ENCODE measurements at regions of chr12 and their contacts with region 1.

Region 1: GRCh38 chr12:121773011-121773777 is 20.3 kb downstream of the RHOF start:
- DNase-seq: peak; percentile 64
- ATAC-seq: peak; percentile 81
- H3K4me3 ChIP-seq: no peak overlapping the region
- H3K27ac ChIP-seq: peak overlapping the region; percentile 49
- H3K4me1 ChIP-seq: peaks cover 20 to 49% of the 10 kb centered on the region in 2 experiments
- H3K27me3 ChIP-seq: no peaks in the 10 kb centered on the region
- CTCF ChIP-seq: peak; percentile 88 to 95 (median 90)
- POLR2A ChIP-seq: no peak
- RAD21 ChIP-seq: peak; percentile 99

Region 2: GRCh38 chr12:121697098-121697698 is 76.0 kb before region 1 on chr12:
- CTCF ChIA-PET with region 1: interaction called, 14 read pairs
- POLR2A ChIA-PET with region 1: no interaction called
- RAD21 ChIA-PET with region 1: interaction called in 1 of 2 experiments, 3 read pairs
- intact Hi-C with region 1: loop called (anchors 1 kb)
- DNase-seq: peak; percentile 47
- ATAC-seq: peak; percentile 59
- H3K4me3 ChIP-seq: no peak overlapping the region
- H3K27ac ChIP-seq: no peak overlapping the region
- H3K4me1 ChIP-seq: peaks cover 0 to 7% of the 10 kb centered on the region in 2 experiments; a peak in 2 of 4 replicates
- H3K27me3 ChIP-seq: no peaks in the 10 kb centered on the region
- CTCF ChIP-seq: peak; percentile 23 to 96 (median 60); a peak in 5 of 6 replicates
- POLR2A ChIP-seq: no peak
- RAD21 ChIP-seq: peak; percentile 89

Region 3: DNA sequence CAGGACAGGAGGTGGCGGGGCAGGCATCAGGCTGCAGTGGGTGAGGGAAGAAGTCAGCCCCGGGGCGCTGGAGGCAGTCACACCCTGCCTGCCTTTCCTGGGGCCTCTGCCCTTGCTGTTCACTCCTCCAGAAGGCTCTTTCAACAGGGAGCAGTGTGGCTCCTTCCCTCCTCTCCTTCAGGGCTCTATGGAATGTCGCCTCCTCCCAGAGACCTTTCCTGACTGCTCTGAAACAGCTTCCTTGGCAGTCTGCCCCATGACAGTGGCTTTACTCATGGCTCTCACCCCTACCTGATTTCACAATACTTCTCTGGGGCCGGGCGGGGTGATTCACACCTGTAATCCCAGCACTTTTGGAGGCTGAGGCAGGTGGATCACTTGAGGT is 13.2 kb after region 1 on chr12:
- CTCF ChIA-PET with region 1: interaction called, 20 read pairs
- POLR2A ChIA-PET with region 1: no interaction called
- RAD21 ChIA-PET with region 1: interaction called in 1 of 2 experiments, 9 read pairs
- intact Hi-C with region 1: no loop called
- DNase-seq: peak; percentile 99
- ATAC-seq: peak; percentile 86
- H3K4me3 ChIP-seq: peak overlapping the region in 1 of 2 experiments; percentile 37; a peak in 2 of 4 replicates
- H3K27ac ChIP-seq: peak overlapping the region; percentile 98
- H3K4me1 ChIP-seq: peaks cover 63 to 95% of the 10 kb centered on the region in 2 experiments
- H3K27me3 ChIP-seq: no peaks in the 10 kb centered on the region
- CTCF ChIP-seq: no peak
- POLR2A ChIP-seq: no peak
- RAD21 ChIP-seq: no peak

Region 4: GRCh38 chr12:121829250-121829918 is 56.2 kb after region 1 on chr12:
- CTCF ChIA-PET with region 1: no interaction called
- POLR2A ChIA-PET with region 1: no interaction called
- RAD21 ChIA-PET with region 1: no interaction called
- intact Hi-C with region 1: no loop called
- DNase-seq: no peak
- ATAC-seq: no peak
- H3K4me3 ChIP-seq: no peak overlapping the region
- H3K27ac ChIP-seq: 0 out of 2 replicates have a peak overlapping the region, but pooled peaks have one; percentile 13
- H3K4me1 ChIP-seq: no peaks in the 10 kb centered on the region
- H3K27me3 ChIP-seq: no peaks in the 10 kb centered on the region
- CTCF ChIP-seq: no peak
- POLR2A ChIP-seq: no peak
- RAD21 ChIP-seq: no peak

Region 5: DNA sequence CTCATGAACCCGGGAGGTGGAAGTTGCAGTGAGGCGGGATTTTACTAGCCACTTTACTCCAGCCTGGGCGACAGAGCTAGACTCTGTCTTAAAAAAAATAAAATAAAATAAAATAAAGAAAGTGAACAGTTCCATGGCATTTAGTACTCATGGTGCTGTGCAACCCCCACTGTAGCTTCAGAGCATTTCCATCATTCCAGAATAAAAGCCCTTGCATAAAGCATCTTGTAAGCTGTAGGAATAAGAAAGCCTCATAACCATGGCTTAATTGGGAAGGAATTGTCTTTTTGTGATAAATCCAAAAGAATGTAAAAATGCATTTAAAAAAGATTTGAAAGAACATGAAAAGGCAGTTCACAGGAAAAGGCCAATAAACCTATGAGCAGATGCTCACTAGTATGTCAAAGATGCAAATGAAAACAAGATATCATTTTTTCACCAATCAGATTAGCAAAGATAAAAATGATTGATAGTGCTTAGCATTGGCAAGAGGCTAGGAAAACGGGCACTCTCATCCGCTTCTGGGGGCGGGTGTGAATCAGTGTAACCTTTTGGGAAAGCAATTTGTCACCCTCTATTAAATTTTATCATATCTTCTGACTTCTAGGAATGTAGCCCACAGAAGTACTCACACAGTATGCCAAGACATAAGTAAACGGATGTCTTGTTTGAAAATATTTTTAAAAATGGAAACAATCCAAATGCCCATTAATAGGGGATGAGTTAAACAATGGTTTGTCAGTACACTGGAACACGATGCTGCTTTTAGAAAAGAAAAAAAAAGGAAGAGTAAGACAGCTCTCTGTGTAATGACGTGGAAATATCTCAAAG is 191.8 kb after region 1 on chr12:
- CTCF ChIA-PET with region 1: no interaction called
- POLR2A ChIA-PET with region 1: no interaction called
- RAD21 ChIA-PET with region 1: no interaction called
- intact Hi-C with region 1: no loop called
- DNase-seq: no peak
- ATAC-seq: no peak
- H3K4me3 ChIP-seq: no peak overlapping the region
- H3K27ac ChIP-seq: no peak overlapping the region
- H3K4me1 ChIP-seq: peaks cover 0 to 6% of the 10 kb centered on the region in 2 experiments; a peak in 1 of 4 replicates
- H3K27me3 ChIP-seq: no peaks in the 10 kb centered on the region
- CTCF ChIP-seq: no peak
- POLR2A ChIP-seq: no peak
- RAD21 ChIP-seq: no peak

Measured in HCT116 (cell line).